Dorsolateral prefrontal cortex (tissue), 120 donors: ENCODE measurements at regions of chr1 and their contacts with region 1.

Region 1: DNA sequence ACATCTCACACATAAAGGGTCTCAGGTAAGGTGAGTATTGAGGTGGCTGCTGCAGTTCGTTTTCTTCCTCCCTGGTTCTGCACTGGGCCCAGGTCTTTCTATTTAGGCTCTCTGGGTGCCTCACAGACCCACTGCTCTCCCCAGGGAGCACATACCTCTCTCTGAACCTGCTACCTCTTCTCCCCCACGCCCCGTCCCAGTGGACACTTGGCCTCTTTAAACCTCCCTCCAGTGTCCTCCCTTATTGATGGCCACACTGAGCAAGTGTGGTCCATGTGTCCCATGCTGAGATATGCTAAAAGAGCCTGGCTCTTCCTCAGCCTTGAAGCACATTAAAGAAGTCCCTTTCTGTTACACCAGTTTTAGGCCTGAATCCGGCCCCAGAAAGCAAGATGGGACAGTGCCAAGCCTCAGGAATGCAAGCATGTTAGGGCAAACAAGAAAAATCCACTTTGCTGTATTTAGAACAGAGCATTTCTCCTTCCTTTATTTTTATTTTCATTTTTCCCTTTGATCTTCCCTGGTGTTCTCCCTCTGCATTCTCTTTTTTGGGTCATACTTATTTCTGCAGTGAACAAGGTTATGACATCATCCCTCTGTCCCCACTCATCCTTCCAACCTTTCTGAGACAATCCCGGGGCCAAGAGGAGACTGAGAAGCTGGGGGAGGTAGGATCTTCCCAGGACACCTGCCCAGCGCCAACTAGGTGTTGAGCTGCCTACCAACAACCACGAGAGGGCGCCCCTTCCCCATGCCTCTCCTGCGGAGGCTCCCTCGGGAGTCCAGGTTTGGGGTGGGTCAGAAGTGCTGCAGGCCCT is 5.0 kb upstream of the CHI3L2 start:
- DNase-seq: peak; percentile 29 to 82 (median 68)
- H3K4me3 ChIP-seq: no peak overlapping the region
- H3K27ac ChIP-seq: peak overlapping the region in 1 of 59 donors; percentile 9
- H3K27me3 ChIP-seq: no peaks in the 10 kb centered on the region
- CTCF ChIP-seq: peak; percentile 58 to 98 (median 91)

Region 2: DNA sequence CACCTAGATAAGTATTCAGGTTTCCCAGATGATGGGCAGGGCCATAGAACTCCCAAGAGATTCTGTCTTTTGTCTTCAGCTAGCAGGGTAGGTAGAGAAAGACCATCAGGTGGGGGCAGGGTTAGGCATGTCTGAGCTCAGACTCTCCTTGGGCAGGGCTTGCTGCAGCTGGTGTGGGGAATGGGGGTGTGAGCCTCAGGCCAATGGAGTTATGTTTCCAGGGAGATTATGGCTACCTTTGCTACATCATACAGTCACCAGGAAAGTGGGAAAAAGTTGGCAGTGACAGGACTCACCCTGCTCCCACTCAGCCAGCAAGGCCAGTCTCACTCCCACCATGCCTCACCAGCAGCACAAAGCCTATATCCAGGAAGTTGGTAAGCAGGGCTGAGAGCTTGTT is 160.4 kb before region 1 on chr1:
- intact Hi-C with region 1: no loop called
- DNase-seq: no peak
- H3K4me3 ChIP-seq: no peak overlapping the region
- H3K27ac ChIP-seq: no peak overlapping the region
- H3K27me3 ChIP-seq: peaks cover 0 to 2% (median 0%) of the 10 kb centered on the region in 45 donors
- CTCF ChIP-seq: no peak

Region 3: GRCh38 chr1:111269825-111270406 is 47.4 kb after region 1 on chr1:
- intact Hi-C with region 1: loop called in 1 of 2 experiments (anchors 5 kb)
- DNase-seq: no peak
- H3K4me3 ChIP-seq: no peak overlapping the region
- H3K27ac ChIP-seq: no peak overlapping the region
- H3K27me3 ChIP-seq: peaks cover 0 to 55% (median 23%) of the 10 kb centered on the region in 45 donors
- CTCF ChIP-seq: no peak

Region 4: DNA sequence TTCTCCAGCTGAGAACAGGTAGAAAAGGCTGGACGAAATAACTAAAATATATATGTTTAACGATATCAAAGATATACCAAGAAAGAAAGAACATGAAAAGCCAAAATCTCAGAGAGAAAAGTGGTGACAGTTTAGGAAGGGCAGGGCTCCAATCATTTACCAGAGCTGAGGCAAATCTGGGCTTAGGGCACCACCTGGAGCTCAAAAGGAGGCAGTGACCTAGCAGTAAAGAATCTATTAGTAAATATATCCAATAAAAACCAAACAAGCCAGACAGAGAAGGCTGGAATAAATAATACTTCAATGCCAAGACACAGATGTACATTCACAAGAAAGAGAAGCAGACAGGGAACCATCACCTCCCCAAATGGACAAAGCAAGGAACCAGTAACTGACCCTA is 111.7 kb after region 1 on chr1:
- intact Hi-C with region 1: loop called (anchors 2 to 5 kb)
- DNase-seq: no peak
- H3K4me3 ChIP-seq: no peak overlapping the region
- H3K27ac ChIP-seq: no peak overlapping the region
- H3K27me3 ChIP-seq: peaks cover 0 to 10% (median 0%) of the 10 kb centered on the region in 45 donors
- CTCF ChIP-seq: peak in 52 of 56 donors; percentile 9 to 84 (median 46)

Region 5: DNA sequence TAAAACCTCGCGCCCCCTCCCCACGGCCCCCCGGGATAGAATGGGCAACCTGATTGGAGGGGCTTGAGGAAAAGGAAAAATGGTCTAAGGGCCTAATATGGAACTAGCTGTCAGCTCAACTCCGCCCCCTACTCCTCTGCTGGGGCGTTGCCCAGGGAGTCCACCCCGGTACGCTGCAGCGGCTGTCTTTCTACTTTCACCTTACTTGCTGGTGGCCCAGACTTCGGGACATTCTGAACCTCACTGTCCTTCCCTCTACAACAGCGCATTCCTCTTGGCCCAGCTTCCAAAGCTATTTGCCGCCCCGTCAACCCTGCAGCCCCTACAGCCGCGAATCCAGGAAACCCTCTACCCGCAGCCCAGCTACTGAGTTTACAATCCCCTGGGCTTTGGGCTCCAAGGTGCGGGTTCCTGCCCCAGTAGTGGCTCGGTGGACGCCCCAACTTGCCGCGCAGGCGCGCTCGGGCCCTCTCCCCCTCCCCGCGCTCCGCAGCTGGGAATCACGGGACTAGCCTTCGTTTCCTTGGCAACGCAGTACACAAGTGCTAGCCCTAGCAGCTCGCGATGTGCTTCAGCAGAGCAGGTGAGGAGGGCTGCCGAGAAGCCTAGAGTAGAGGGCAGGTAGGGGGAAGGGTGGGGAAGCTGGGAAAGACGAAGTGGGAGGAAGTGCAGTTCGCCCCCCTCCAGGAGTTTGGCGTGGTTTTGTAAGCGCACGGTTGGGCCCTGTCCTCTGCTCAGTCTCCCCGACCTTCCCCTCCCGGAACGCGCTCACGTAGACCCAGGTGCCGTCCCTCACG is 123.8 kb after region 1 on chr1:
- intact Hi-C with region 1: loop called in 1 of 2 experiments (anchors 5 kb)
- DNase-seq: peak; percentile 44 to 92 (median 86)
- H3K4me3 ChIP-seq: peak overlapping the region; percentile 37 to 81 (median 67)
- H3K27ac ChIP-seq: peak overlapping the region in 25 of 59 donors; percentile 5 to 85 (median 51)
- H3K27me3 ChIP-seq: no peaks in the 10 kb centered on the region
- CTCF ChIP-seq: peak in 6 of 56 donors; percentile 4 to 41 (median 11)

Region 6: GRCh38 chr1:111399792-111400610 is 177.5 kb after region 1 on chr1:
- intact Hi-C with region 1: loop called (anchors 2 kb)
- DNase-seq: peak in 3 of 10 donors; percentile 12 to 51 (median 12)
- H3K4me3 ChIP-seq: no peak overlapping the region
- H3K27ac ChIP-seq: no peak overlapping the region
- H3K27me3 ChIP-seq: peaks cover 0 to 13% (median 0%) of the 10 kb centered on the region in 45 donors
- CTCF ChIP-seq: peak; percentile 63 to 89 (median 81)

Region 7: DNA sequence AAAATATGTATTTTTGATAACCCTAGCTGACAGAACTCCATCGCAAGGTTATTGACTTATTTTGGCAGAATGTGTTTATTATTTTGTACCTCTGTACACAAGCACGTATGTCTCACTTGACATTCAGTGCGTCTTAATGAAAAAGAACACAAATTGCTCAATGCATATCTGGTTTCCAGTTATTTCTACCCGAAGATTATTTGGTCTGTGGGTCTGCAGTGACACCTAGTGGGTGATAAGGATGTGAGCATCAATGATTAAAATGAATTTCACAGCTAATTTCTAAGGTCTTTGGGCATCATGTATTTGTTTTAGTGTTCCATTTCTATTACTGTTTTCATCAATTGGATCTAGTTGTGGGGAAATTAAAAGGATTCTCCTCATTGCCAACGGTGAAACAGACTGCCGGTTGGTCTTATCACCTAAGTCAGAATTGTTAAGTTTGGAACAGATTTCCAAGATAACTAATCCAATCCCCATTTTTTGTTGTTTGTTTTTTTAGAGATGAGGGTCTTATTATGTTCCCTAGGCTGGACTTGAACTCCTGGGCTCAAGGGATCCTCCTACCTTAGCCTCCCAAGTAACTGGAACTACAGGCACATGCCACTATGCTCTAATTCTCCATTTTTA is 547.1 kb after region 1 on chr1:
- intact Hi-C with region 1: loop called in 1 of 2 experiments (anchors 10 kb)
- DNase-seq: peak in 1 of 10 donors; percentile 44
- H3K4me3 ChIP-seq: no peak overlapping the region
- H3K27ac ChIP-seq: peak overlapping the region in 8 of 59 donors; percentile 3 to 76 (median 24)
- H3K27me3 ChIP-seq: no peaks in the 10 kb centered on the region
- CTCF ChIP-seq: peak; percentile 71 to 97 (median 86)